Aorta (tissue), 5 donors: ENCODE measurements at regions of chr1 and their contacts with region 1.

Region 1: GRCh38 chr1:155859234-155859829 is at the start of gene SYT11:
- DNase-seq: peak; percentile 97 to 98
- ATAC-seq: peak; percentile 95
- H3K4me3 ChIP-seq: peak within 1 kb of the TSS; percentile 22 to 30
- H3K27ac ChIP-seq: peak within 1 kb of the TSS; percentile 45 to 74
- H3K4me1 ChIP-seq: no peaks in the 10 kb centered on the region
- H3K27me3 ChIP-seq: no peaks in the 10 kb centered on the region
- total RNA-seq, gene SYT11: 42.8 to 49.5 TPM

Region 2: GRCh38 chr1:155893389-155894142 is 34.2 kb after region 1 on chr1:
- intact Hi-C with region 1: loop called in 1 of 2 experiments (anchors 5 kb)
- DNase-seq: no peak
- ATAC-seq: peak; percentile 79
- H3K4me3 ChIP-seq: no peak overlapping the region
- H3K27ac ChIP-seq: peak overlapping the region; percentile 85 to 91
- H3K4me1 ChIP-seq: no peaks in the 10 kb centered on the region
- H3K27me3 ChIP-seq: no peaks in the 10 kb centered on the region

Region 3: DNA sequence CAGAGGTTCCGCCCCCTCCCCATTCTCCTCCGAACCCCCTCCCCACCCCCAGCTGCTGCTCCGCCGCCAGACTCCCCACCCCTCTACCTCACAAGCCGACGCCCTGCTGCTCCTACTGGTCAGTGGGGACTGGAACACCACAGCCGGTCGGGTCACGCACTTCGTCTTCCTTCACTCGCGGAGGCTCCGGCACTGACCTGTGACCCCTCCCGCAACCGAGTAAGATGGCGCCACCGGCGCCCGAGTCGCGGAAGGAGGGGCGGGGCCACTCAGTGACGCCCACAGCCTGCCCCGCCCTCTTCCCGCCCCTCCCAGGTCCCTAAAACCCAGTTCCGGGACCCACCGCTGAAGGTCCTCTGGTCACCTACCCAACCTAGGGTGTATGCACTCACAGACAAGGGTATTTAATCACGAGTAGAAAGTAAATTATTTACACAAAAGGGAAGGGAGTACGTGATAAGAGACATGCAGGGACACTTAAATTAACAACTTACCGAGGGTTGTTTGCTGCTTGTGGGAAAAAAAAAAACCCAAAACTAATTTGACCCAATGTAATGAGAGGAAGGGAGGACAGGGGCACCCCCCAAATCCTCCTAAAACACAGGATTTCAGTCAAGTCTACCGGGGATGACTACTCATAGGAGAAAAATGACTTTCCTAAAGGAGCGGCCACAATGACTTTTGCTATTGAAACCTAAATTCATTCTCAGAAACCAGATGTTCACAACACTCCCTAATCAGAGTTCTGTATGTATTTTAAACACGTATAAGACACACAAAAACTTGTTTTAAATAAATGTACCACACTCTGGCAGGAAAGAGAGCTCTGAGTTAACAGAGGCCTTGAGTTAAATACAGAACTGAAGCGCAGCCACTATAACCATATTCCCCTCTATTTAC is 52.1 kb after region 1 on chr1 and contains the start of gene RIT1:
- intact Hi-C with region 1: loop called in 1 of 2 experiments (anchors 5 kb)
- DNase-seq: peak; percentile 93 to 96
- ATAC-seq: peak; percentile 97
- H3K4me3 ChIP-seq: peak within 1 kb of the TSS; percentile 63 to 69
- H3K27ac ChIP-seq: peak within 1 kb of the TSS; percentile 17 to 81
- H3K4me1 ChIP-seq: no peaks in the 10 kb centered on the region
- H3K27me3 ChIP-seq: no peaks in the 10 kb centered on the region
- total RNA-seq, gene RIT1: 49.6 to 49.9 TPM